Mammary epithelial cell (primary cell): ENCODE measurements at regions of chr20 and their contacts with region 1.

Region 1: DNA sequence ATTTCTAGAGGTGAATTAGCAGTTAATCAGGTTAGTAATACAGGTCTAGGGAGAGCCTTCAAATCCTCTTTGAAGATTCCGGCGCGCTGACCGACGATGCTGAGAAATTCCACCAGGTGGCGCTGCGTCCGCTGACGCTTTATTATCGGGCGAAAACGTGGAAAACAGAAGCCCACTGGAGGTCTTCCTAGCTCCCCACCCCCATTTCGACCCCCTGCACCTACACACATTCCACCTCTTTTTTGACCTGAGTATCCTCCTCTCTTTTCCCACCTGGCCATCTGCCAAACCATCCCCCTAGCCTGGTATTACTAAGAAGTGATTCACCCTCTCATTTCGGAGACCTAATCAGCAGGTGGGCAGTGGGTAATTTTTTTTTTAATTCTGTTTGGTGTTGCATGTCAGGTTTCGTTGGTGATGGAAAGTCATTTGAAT is 65.4 kb upstream of the RIN2 start:
- DNase-seq: peak; percentile 65
- H3K4me3 ChIP-seq: peak overlapping the region in 1 of 3 experiments; percentile 26
- H3K27ac ChIP-seq: no peak overlapping the region
- H3K4me1 ChIP-seq: peaks cover 24% of the 10 kb centered on the region
- H3K27me3 ChIP-seq: no peaks in the 10 kb centered on the region
- CTCF ChIP-seq: peak; percentile 92 to 93

Region 2: DNA sequence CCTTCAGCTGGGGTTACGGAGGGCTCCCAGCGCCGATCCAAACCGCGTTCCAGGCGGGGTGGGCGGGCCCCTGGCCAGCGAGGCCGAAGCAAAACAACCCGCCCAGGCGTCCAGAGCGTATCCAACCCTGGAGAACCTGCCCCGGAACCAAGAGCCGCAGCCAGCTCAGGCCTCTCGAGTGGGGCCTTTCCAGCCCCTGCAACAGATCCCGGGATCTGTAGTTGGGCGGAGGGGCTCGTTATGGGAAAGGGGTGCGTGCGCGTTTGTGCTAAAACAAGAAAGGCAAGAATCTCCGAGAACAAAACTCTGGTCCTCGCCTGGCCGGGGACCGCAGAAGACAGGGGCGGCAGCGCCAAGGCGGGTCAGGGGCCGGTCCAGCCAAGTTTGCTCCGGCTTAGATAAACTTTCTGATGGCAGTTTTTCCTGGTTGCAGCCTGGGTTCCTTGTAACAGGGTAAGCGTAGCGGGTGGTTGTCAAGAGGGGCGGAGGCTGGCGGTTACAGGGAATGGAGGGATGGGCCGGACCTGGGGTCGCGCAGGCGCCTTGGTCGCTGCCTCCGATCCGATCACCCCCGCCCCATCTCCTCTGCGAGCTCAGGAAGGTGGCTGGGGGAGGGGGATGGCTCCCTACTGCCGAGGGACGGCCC is 64.9 kb after region 1 on chr20:
- CTCF ChIA-PET with region 1: no interaction called
- dilution Hi-C with region 1: no loop called
- in situ Hi-C with region 1: no loop called
- intact Hi-C with region 1: loop called (anchors 1 kb)
- DNase-seq: peak; percentile 65
- H3K4me3 ChIP-seq: peak overlapping the region; percentile 64 to 70 (median 67)
- H3K27ac ChIP-seq: peak overlapping the region; percentile 33
- H3K4me1 ChIP-seq: peaks cover 19% of the 10 kb centered on the region
- H3K27me3 ChIP-seq: no peaks in the 10 kb centered on the region
- CTCF ChIP-seq: no peak

Region 3: DNA sequence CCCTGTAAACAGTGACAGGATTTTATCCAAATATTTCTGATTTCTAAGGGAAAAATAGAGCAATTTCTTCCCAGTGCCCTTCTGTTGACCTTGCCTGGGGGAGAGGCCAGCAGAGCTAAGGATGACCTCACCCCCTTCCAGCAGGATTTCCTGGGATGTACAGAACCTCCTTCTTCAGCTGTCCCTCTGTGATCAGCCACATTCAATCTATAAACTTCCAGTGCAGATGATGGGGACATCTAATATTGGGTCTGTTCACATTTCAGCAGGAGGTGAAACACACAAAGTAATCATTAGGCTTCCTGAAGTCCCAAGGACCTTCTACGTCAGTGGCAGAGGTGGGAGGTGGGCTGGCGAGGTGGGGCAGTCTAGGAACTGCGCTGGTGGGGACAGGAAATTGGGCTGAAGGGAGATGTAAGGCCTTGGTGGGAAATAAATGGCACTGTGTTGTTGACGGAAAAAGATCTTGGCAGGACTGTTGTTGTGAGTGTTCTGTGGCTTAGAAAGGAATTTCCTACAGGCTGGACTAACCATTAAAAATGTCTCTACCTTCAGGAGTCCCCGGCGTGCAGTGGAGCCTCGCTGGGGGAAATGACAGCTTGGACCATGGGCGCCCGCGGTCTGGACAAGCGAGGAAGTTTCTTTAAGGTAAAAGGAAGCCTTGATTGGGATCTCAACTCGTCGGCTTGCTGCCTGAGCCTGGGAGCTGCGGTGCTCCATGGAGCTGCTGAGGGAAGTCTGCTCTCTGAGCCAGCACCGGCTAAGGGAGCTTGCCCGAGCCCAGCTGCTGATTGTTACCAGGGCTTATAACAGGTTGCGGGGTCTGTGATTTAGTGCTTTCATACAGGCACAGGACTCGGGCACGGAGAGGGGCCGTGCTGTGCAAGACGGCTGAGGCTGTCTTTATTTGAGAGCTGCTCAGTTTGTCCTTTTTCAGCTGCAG is 196.6 kb after region 1 on chr20:
- CTCF ChIA-PET with region 1: no interaction called
- dilution Hi-C with region 1: no loop called
- in situ Hi-C with region 1: loop called in 1 of 2 experiments (anchors 10 kb)
- intact Hi-C with region 1: loop called (anchors 1 kb)
- DNase-seq: peak; percentile 56
- H3K4me3 ChIP-seq: peak overlapping the region; percentile 25 to 39 (median 31)
- H3K27ac ChIP-seq: peak overlapping the region; percentile 64
- H3K4me1 ChIP-seq: peaks cover 59% of the 10 kb centered on the region
- H3K27me3 ChIP-seq: no peaks in the 10 kb centered on the region
- CTCF ChIP-seq: no peak

Region 4: DNA sequence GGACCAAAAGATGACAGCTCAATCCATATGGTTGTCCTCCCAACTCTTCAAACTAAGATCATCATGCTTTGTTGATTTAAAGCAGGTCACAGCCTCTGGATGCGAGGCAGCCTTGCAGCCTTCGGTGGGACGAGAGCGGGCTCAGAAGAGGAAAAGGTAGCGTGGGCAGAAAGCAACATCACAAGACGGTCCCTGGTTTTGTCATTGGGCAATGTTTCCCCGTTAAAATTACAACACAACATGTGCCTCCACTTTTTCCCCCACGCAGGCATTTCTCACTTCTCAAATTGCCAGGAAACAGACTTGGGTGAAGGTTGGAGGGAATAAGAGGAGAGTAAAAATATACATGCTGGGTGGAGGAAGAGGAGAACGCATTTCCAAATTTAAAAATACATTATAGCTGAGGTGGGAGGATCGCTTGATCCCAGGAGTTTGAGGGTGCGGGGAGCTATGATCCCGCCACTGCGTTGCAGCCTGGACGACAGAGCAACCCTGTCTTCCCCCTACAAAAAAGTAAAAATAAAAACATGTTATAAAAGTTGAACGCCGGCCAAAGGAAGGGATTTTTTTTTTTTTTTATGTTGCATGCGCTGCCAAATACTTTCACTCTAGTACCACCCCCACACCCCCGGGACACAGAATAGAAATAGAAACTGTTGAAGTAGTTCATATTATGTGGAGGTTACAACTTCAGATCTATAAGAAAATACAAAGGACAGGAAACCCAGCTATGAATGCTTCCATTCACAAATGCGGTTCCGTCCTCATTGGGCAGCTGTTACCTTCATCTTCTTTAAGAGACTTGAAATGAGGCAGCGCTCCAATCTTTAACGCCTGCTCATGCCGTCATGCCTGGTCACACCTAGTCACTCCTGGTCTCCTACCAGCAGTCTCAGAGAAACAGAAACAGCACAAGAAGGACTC is 310.6 kb after region 1 on chr20:
- CTCF ChIA-PET with region 1: no interaction called
- dilution Hi-C with region 1: no loop called
- in situ Hi-C with region 1: loop called (anchors 5 to 10 kb)
- intact Hi-C with region 1: no loop called
- DNase-seq: peak; percentile 56
- H3K4me3 ChIP-seq: no peak overlapping the region
- H3K27ac ChIP-seq: peak overlapping the region; percentile 17
- H3K4me1 ChIP-seq: peaks cover 12% of the 10 kb centered on the region
- H3K27me3 ChIP-seq: no peaks in the 10 kb centered on the region
- CTCF ChIP-seq: no peak

Region 5: GRCh38 chr20:20052074-20052970 is 359.6 kb after region 1 on chr20 and contains the starts of genes CFAP61 and CRNKL1:
- CTCF ChIA-PET with region 1: no interaction called
- dilution Hi-C with region 1: no loop called
- in situ Hi-C with region 1: no loop called
- intact Hi-C with region 1: loop called (anchors 10 kb)
- DNase-seq: peak; percentile 96
- H3K4me3 ChIP-seq: peak within 1 kb of the TSS; percentile 78 to 92 (median 80)
- H3K27ac ChIP-seq: peak within 1 kb of the TSS; percentile 86
- H3K4me1 ChIP-seq: peaks cover 5% of the 10 kb centered on the region
- H3K27me3 ChIP-seq: no peaks in the 10 kb centered on the region
- CTCF ChIP-seq: peak in 1 of 2 donors; percentile 18
- total RNA-seq, gene CFAP61: 0.67 TPM in 1 of 2 donors, not detected in the other
- total RNA-seq, gene CRNKL1: 15.7 to 16.7 TPM